ENCODE measurements at regions of chr4 and their contacts with region 1.

Region 1: GRCh38 chr4:88591787-88592599 is at the start of gene HERC3:
- DNase-seq: peak; percentile 87
- H3K4me3 Mint-ChIP-seq: peak within 1 kb of the TSS; percentile 86
- H3K27ac Mint-ChIP-seq: peak within 1 kb of the TSS; percentile 63
- H3K4me1 Mint-ChIP-seq: peaks cover 30% of the 10 kb centered on the region
- H3K27me3 Mint-ChIP-seq: peaks cover 23% of the 10 kb centered on the region
- total RNA-seq, gene HERC3: 18.9 and 22.1 TPM in 2 replicates

Region 2: DNA sequence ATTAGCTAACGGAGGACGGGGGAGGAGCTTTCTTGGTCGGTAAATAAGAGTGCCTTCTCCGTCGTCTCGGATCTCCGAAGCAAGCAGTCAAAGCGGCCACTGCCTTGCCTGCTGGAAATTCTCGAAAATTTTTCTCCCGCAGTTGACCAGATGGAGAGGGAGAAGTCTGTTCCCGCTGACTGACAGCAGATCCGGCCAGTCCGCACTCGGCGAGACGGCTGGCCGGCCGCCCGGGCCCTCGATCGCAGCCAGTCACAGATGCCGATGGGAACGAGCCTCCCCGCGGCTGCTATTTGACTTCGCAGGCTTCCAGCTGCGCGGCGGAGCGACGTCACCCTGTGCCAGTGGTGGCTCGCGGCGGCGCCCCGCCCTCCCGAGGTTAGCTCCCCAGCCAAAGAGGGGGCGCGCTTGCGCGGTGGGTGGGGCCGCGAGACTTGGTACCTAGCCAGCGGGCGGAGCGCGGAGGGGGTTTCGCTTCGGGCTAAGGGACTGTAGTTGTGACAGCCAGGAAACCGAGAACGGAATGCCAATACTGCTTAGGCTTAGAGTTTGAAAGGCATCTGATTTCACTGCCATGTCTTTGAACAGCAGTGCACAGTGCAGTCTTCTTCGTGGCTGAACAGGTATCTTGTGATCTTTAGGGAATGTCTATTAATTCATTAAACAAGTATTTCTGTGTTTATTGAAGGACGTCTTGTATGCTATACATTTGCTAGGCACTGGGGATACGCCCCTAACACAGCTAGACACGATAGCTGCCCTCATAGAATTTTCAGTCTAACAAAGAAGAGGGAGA is 307.4 kb before region 1 on chr4 and contains the start of gene PPM1K:
- intact Hi-C with region 1: loop called (anchors 1 kb)
- DNase-seq: peak; percentile 99
- H3K4me3 Mint-ChIP-seq: peak within 1 kb of the TSS; percentile 99
- H3K27ac Mint-ChIP-seq: peak within 1 kb of the TSS; percentile 100
- H3K4me1 Mint-ChIP-seq: peaks cover 38% of the 10 kb centered on the region
- H3K27me3 Mint-ChIP-seq: no peaks in the 10 kb centered on the region
- total RNA-seq, gene PPM1K: 38.5 and 39.9 TPM in 2 replicates

Region 3: DNA sequence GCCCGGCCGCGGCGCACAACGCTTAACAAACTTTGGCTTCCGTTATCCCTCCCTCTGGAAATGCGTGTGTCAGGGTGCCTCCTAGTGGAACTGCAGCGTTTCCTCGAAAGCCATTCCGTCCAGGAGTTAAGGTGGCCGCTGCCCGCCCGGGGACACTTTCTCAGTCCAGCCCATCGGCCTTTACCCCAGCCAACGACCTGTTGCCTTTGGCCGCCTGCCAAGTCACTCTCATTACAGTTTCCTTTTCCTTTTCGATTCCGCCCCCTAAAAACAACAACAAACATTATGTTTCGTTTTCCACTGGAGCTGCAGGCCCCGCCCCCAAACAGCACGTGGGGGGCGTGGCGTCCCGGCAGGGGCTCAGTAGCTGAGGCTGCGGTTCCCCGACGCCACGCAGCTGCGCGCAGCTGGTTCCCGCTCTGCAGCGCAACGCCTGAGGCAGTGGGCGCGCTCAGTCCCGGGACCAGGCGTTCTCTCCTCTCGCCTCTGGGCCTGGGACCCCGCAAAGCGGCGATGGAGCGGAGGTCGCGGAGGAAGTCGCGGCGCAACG is 135.2 kb before region 1 on chr4 and contains the start of gene HERC5:
- intact Hi-C with region 1: loop called (anchors 1 kb)
- DNase-seq: peak; percentile 91
- H3K4me3 Mint-ChIP-seq: peak within 1 kb of the TSS; percentile 99
- H3K27ac Mint-ChIP-seq: peak within 1 kb of the TSS; percentile 100
- H3K4me1 Mint-ChIP-seq: peaks cover 26% of the 10 kb centered on the region
- H3K27me3 Mint-ChIP-seq: peaks cover 5% of the 10 kb centered on the region
- total RNA-seq, gene HERC5: 8.4 and 10.2 TPM in 2 replicates

Region 4: DNA sequence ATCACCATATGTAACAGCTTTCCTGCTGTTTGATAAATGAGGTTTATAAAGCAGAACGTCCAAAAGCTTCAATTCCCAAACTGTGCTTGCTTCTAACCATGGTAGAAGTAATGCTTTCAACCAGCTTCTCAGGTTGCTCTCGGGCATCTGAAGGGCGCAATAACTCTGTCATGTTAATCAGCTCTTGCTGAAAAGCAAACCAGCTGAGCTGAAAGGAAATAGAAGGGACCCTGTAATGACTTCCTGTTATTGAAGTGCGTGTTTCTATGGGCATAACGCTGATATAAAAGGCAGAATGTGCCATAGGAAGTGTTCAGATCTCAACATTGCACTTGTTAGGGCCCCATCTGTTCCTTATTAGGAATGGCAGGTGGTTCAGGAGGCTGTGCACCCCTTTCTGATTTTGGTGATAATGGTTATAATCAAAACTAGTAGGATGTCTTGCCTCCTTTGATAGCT is 21.5 kb after region 1 on chr4:
- intact Hi-C with region 1: loop called (anchors 2 kb)
- DNase-seq: no peak
- H3K4me3 Mint-ChIP-seq: peak overlapping the region; percentile 19
- H3K27ac Mint-ChIP-seq: peak overlapping the region; percentile 54
- H3K4me1 Mint-ChIP-seq: peaks cover 48% of the 10 kb centered on the region
- H3K27me3 Mint-ChIP-seq: no peaks in the 10 kb centered on the region

Region 5: DNA sequence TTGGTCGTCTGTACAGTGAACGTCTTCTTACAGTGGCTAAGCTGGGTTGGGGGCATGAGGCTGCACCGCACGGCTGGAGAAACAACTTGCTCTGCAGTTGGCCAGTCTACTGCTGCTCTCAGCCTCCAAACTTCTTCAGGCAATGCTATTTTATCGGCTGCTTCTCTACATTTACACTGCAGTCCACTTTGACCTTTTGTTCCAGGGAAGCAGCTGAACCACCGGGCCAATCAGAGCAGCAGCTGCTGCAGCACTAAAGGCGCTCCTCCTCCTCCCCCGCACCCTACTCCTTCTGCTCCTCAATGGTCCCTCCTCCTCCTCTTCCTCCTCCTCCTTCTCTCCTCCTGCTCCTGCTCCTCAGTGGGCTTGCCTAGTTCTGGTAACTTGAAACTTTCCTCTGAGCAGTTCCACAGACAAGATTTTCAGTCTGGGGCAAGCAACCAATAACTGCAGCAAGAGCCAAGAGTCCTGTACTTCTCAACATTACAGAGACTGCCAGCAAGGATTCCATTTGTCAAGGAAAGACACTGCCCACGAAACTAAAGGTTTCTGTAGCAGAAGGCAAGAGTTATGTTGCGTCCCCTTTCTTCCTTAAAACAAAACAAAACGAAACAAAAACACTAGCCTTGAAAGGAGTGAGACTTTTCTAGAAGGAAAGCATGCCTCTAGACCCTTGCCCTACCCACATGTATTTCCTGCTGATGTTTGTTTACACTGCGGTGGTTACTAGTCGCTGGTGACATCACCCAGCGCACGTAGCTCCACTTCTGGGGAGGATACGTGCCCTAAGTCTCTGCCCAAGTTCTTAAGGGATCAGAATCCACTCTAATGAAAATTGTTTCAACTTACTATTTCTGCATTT is 231.3 kb after region 1 on chr4:
- intact Hi-C with region 1: loop called (anchors 2 kb)
- DNase-seq: peak; percentile 71
- H3K4me3 Mint-ChIP-seq: peak overlapping the region; percentile 91
- H3K27ac Mint-ChIP-seq: peak overlapping the region; percentile 97
- H3K4me1 Mint-ChIP-seq: peaks cover 41% of the 10 kb centered on the region
- H3K27me3 Mint-ChIP-seq: peaks cover 1% of the 10 kb centered on the region

Region 6: DNA sequence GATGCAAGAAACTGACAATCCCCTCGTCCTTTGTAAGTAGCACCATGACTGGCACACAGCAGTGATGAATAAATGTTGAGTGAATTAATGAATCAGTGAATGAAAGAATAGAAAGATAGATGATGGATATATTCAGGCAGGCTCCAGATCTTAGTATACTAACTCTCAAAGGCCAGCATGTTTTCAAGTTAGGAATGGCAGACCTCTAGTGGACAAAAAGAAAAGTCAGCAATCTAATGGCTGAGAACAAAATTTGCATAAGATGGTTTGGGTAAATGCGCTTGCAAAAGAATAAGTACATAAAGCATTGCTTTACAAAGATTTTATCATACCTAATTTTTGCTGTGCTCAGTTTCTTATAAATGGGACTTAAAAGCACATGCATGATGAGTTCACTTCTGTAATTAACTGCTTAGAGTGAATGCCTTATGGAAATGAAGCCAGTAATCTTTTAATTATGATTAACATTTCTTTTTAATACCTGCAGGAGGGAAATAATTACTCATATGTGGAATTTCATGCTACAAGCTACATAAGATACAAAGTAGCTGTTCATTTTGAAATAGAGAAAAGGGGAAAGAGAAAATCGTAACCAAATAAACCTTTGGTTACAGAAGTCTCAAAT is 842.5 kb after region 1 on chr4:
- intact Hi-C with region 1: no loop called
- DNase-seq: no peak
- H3K4me3 Mint-ChIP-seq: no peak overlapping the region
- H3K27ac Mint-ChIP-seq: no peak overlapping the region
- H3K4me1 Mint-ChIP-seq: peaks cover 17% of the 10 kb centered on the region
- H3K27me3 Mint-ChIP-seq: peaks cover 3% of the 10 kb centered on the region

Measured in activated T-helper 2 cell treated with anti-CD3 and anti-CD28 coated beads, Interferon-gamma antibody, Interleukin-2, Interleukin-4, amounts not matched to agents 10 μg/mL and 5 μg/mL and 100 μg/mL, durations not matched to agents 14 hours and 24 hours and 36 hours (primary cell).